H1 (cell line): ENCODE measurements at regions of chr10 and their contacts with region 1.

Region 1: DNA sequence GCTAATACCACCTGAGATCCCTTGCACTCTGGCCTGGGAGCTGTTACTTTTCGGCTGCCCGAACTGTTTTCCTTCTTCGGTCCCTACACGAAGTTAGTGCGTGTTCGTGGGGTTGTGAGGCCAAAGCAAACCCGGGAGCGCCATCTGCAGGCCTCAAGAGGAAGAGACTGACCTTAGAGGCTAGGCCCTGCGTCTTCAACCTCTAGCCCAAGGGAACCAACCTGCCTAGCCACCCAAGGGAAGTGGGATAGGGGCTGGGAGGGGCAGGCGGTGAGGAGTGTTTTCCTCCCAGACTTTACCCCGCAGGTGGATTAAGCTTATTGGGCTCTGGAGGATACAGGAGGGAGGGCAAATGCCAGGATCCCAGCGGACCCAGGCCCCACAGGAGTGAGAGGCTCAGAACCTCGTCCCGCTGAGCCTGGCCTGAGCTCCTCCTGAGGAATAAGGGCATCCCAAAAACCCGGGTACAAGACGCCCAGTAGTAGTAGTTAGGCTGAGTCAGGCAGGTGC is 1.7 kb upstream of the PAX2 start:
- DNase-seq: no peak
- H3K4me3 ChIP-seq: peak overlapping the region in 1 of 4 experiments; percentile 57; a peak in 3 of 8 replicates
- H3K27ac ChIP-seq: no peak overlapping the region
- H3K4me1 ChIP-seq: peaks cover 0 to 33% (median 26%) of the 10 kb centered on the region in 4 experiments; a peak in 6 of 7 replicates
- H3K27me3 ChIP-seq: peaks cover 79 to 94% (median 92%) of the 10 kb centered on the region in 4 experiments
- CTCF ChIP-seq: peak; percentile 70 to 84 (median 83)
- EP300 ChIP-seq: no peak
- POLR2A ChIP-seq: no peak
- RAD21 ChIP-seq: peak; percentile 80

Region 2: DNA sequence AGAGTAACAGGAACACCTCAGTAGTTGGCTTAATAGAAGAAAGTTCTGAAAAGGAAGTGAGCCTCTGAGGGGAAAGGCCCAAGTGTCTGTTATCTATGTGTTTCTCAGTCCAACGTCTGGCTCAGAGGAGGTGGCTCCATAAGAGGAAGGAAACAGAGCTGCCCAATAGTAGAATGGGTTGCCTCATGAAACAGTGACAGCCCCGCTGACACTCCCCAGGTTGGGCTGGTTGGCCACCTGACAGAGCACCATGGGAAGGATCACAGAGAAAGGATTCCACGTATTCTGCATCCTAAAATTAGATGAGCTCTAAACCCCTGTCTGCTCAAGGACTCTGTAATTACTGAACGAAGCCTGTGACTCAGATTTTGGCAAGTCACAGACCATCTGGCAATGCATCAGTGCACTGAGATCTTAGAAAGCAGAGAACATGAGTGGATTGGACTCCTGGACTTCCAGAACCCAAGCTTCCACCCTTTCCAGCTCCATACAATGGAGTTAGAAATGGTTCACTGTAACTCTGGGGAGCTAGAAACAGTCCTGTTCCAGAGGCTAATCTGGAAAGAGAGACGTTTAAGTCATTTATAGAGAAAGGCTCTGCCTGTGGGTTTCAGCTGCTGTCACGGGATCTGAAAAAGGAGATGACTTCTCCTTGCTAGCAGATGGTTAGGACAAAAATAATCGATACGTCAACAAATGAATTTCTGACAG is 416.5 kb before region 1 on chr10:
- CTCF ChIA-PET with region 1: no interaction called
- POLR2A ChIA-PET with region 1: no interaction called
- DNase-seq: no peak
- H3K4me3 ChIP-seq: no peak overlapping the region
- H3K27ac ChIP-seq: no peak overlapping the region
- H3K4me1 ChIP-seq: no peaks in the 10 kb centered on the region; a peak in 1 of 7 replicates
- H3K27me3 ChIP-seq: no peaks in the 10 kb centered on the region; a peak in 3 of 7 replicates
- CTCF ChIP-seq: no peak
- EP300 ChIP-seq: no peak
- POLR2A ChIP-seq: no peak
- RAD21 ChIP-seq: no peak

Region 3: DNA sequence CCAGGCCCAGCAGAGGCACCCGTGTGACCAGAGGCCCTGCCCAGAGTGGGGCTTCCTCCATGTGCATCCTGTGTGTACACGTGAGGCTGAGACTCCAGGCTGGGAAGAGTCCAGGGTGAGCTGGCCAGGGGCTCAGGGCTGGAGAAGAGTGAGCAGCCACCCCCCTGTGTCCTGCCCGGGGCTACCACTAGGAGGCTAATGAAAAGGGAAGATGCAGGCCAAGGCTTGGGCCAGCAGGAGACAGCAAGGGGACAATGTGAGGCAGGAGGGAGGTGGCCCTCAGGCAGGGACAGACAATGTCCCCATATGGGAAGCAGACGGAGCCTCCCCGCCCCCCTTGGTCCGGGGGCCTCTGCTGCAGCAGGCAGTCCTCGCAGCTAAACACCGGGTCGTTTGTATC is 105.9 kb before region 1 on chr10:
- CTCF ChIA-PET with region 1: interaction called, 27 read pairs
- POLR2A ChIA-PET with region 1: no interaction called
- DNase-seq: peak; percentile 29 to 87
- H3K4me3 ChIP-seq: no peak overlapping the region; a peak in 1 of 8 replicates
- H3K27ac ChIP-seq: no peak overlapping the region
- H3K4me1 ChIP-seq: peaks cover 8 to 19% (median 12%) of the 10 kb centered on the region in 4 experiments
- H3K27me3 ChIP-seq: peaks cover 0 to 6% (median 2%) of the 10 kb centered on the region in 4 experiments; a peak in 1 of 7 replicates
- CTCF ChIP-seq: peak; percentile 95 to 98 (median 97)
- EP300 ChIP-seq: no peak
- POLR2A ChIP-seq: no peak
- RAD21 ChIP-seq: peak; percentile 60 to 77

Region 4: GRCh38 chr10:100683545-100684300 is 60.0 kb before region 1 on chr10:
- CTCF ChIA-PET with region 1: interaction called, 13 read pairs
- POLR2A ChIA-PET with region 1: no interaction called
- DNase-seq: no peak
- H3K4me3 ChIP-seq: peak overlapping the region; percentile 15 to 53 (median 20); a peak in 5 of 8 replicates
- H3K27ac ChIP-seq: no peak overlapping the region
- H3K4me1 ChIP-seq: peaks cover 3 to 24% (median 10%) of the 10 kb centered on the region in 4 experiments
- H3K27me3 ChIP-seq: peaks cover 13 to 79% (median 66%) of the 10 kb centered on the region in 4 experiments
- CTCF ChIP-seq: no peak
- EP300 ChIP-seq: no peak
- POLR2A ChIP-seq: no peak
- RAD21 ChIP-seq: no peak

Region 5: DNA sequence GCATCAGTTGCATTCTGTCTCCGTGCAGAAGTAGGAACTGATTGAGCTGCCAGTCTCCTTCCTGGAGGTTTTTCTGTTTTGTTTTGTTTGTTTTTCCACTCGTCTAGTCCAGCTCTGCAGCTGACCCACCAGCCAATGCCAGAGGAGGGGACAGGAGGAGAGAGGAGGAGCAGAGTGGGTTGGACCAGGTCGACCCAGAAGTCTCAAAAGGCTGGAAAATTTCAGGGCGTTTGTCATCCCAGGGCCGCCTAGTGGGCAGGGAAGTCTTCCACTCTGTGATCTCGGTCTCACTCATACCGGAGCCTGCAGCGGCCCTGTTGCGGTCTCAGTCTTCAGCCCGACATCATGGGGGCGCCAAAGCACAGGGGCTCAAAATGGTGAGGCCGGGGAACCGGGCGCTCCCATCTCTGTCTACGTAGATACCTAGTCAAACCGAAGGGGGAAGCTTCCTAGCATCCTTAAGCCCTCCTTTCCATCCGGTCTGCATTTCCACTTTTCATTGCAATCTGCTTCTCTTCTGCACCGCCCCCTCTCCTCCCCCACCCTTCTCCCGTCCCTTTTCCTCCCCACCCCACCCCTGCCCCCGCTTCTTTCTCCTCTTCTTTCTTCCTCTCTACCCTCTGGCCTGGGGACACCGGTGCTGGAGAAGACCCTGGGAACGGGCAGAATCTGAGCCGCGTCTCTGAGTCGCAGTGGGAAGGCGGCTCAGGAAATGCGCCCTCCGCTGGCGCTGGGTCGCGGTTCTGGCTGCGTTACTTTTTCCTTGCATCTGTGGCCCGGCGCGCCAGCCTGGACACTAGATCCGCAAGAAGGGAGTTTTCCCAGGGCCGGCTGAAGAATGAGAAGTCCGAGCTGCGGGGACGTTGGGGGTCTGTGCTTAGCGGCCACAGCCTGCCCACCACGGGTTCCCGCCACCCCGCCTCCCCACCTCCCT is 14.5 kb before region 1 on chr10:
- CTCF ChIA-PET with region 1: interaction called, 95 read pairs
- POLR2A ChIA-PET with region 1: interaction called, 5 read pairs
- DNase-seq: peak in 1 of 2 experiments; percentile 79
- H3K4me3 ChIP-seq: peak overlapping the region in 1 of 4 experiments; percentile 48; a peak in 2 of 8 replicates
- H3K27ac ChIP-seq: no peak overlapping the region
- H3K4me1 ChIP-seq: peaks cover 4 to 20% (median 11%) of the 10 kb centered on the region in 4 experiments
- H3K27me3 ChIP-seq: peaks cover 94 to 99% (median 97%) of the 10 kb centered on the region in 4 experiments
- CTCF ChIP-seq: peak; percentile 58 to 72 (median 69)
- EP300 ChIP-seq: no peak
- POLR2A ChIP-seq: no peak
- RAD21 ChIP-seq: peak; percentile 50 to 64

Region 6: GRCh38 chr10:100827819-100828737 is 84.4 kb after region 1 on chr10:
- CTCF ChIA-PET with region 1: interaction called, 34 read pairs
- POLR2A ChIA-PET with region 1: interaction called, 3 read pairs
- DNase-seq: peak in 1 of 2 experiments; percentile 74
- H3K4me3 ChIP-seq: peak overlapping the region in 3 of 4 experiments; percentile 26 to 53 (median 28); a peak in 5 of 8 replicates
- H3K27ac ChIP-seq: no peak overlapping the region
- H3K4me1 ChIP-seq: peaks cover 4 to 26% (median 20%) of the 10 kb centered on the region in 4 experiments
- H3K27me3 ChIP-seq: peaks cover 96 to 100% (median 100%) of the 10 kb centered on the region in 4 experiments
- CTCF ChIP-seq: peak in 1 of 3 experiments; percentile 42; a peak in 2 of 4 replicates
- EP300 ChIP-seq: no peak
- POLR2A ChIP-seq: no peak
- RAD21 ChIP-seq: peak; percentile 12 to 52; a peak in 3 of 4 replicates